ENCODE measurements at regions of chr19 and their contacts with region 1.

Region 1: GRCh38 chr19:40425450-40426287 is at the start of gene SERTAD1:
- DNase-seq: peak; percentile 100
- ATAC-seq: peak; percentile 89
- H3K4me3 ChIP-seq: peak within 1 kb of the TSS; percentile 89
- H3K4me3 Mint-ChIP-seq: peak within 1 kb of the TSS; percentile 99
- H3K27ac ChIP-seq: peak within 1 kb of the TSS; percentile 90
- H3K27ac Mint-ChIP-seq: peak within 1 kb of the TSS; percentile 91
- H3K4me1 ChIP-seq: peaks cover 45% of the 10 kb centered on the region
- H3K4me1 Mint-ChIP-seq: peaks cover 36% of the 10 kb centered on the region
- H3K27me3 ChIP-seq: no peaks in the 10 kb centered on the region
- H3K27me3 Mint-ChIP-seq: no peaks in the 10 kb centered on the region
- CTCF ChIP-seq: peak; percentile 67
- total RNA-seq, gene SERTAD1: 26.4 to 26.5 TPM

Region 2: DNA sequence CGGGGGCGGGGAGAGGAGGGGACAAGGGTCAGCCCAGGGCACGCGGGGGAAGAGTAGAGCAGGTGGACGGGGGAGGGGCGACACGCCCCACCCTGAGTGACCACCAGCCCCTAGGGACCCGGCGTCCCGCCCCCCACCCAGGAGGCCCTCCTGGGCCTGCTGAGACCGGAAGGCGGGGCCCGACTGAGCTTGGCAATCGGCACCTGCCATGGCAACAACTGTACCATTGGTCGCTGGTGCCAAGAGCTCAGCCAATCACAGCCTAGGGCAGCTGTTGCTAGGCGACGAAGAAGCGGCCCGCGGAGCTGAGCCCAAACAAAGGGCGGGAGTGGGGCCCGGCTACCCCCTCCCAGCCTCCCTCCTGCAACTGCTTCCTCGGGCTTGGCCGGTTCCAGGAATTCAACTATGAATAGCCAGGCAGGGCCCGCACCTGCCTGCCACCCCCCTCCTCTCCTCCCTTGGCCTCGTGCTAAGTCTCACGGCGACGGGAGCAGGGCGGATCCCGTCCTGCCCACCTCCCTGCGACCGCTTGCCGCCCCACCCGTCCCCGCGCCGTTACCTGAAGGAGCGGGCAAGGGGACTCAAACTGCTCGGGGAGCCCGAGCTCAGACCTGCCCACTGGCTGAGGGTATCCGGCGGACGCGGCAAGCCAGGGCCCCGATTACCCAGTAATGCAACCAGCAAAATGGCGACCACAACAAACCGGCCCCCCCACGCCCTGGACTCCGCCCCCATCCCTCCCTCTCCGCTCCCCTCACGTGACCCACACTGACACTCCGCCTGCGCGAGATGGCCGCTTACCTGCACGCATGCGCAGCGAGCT is 592.0 kb before region 1 on chr19 and contains the start of gene DYRK1B:
- CTCF ChIA-PET with region 1: no interaction called
- POLR2A ChIA-PET with region 1: no interaction called
- intact Hi-C with region 1: loop called in 1 of 2 experiments (anchors 10 kb)
- DNase-seq: peak; percentile 96 to 100 (median 98)
- ATAC-seq: peak; percentile 86
- H3K4me3 ChIP-seq: peak within 1 kb of the TSS; percentile 88
- H3K4me3 Mint-ChIP-seq: peak within 1 kb of the TSS; percentile 81
- H3K27ac ChIP-seq: peak within 1 kb of the TSS; percentile 96 to 99
- H3K27ac Mint-ChIP-seq: peak within 1 kb of the TSS; percentile 68
- H3K4me1 ChIP-seq: peaks cover 29% of the 10 kb centered on the region
- H3K4me1 Mint-ChIP-seq: peaks cover 20% of the 10 kb centered on the region
- H3K27me3 ChIP-seq: no peaks in the 10 kb centered on the region
- H3K27me3 Mint-ChIP-seq: no peaks in the 10 kb centered on the region
- CTCF ChIP-seq: no peak
- total RNA-seq, gene DYRK1B: 18.9 to 19.4 TPM

Region 3: GRCh38 chr19:40348125-40348913 is 77.3 kb before region 1 on chr19 and contains the starts of genes C19orf47 and PLD3:
- CTCF ChIA-PET with region 1: interaction called, 9 read pairs
- POLR2A ChIA-PET with region 1: interaction called, 10 read pairs
- intact Hi-C with region 1: loop called in 1 of 2 experiments (anchors 1 kb)
- DNase-seq: peak; percentile 93 to 100 (median 98)
- ATAC-seq: peak; percentile 90
- H3K4me3 ChIP-seq: peak within 1 kb of the TSS; percentile 68
- H3K4me3 Mint-ChIP-seq: peak within 1 kb of the TSS; percentile 96
- H3K27ac ChIP-seq: peak within 1 kb of the TSS; percentile 51 to 67
- H3K27ac Mint-ChIP-seq: peak within 1 kb of the TSS; percentile 89
- H3K4me1 ChIP-seq: peaks cover 25% of the 10 kb centered on the region
- H3K4me1 Mint-ChIP-seq: peaks cover 46% of the 10 kb centered on the region
- H3K27me3 ChIP-seq: no peaks in the 10 kb centered on the region
- H3K27me3 Mint-ChIP-seq: no peaks in the 10 kb centered on the region
- CTCF ChIP-seq: no peak
- total RNA-seq, gene C19orf47: 10.1 to 11.2 TPM
- total RNA-seq, gene PLD3: 56.1 to 58.3 TPM

Region 4: DNA sequence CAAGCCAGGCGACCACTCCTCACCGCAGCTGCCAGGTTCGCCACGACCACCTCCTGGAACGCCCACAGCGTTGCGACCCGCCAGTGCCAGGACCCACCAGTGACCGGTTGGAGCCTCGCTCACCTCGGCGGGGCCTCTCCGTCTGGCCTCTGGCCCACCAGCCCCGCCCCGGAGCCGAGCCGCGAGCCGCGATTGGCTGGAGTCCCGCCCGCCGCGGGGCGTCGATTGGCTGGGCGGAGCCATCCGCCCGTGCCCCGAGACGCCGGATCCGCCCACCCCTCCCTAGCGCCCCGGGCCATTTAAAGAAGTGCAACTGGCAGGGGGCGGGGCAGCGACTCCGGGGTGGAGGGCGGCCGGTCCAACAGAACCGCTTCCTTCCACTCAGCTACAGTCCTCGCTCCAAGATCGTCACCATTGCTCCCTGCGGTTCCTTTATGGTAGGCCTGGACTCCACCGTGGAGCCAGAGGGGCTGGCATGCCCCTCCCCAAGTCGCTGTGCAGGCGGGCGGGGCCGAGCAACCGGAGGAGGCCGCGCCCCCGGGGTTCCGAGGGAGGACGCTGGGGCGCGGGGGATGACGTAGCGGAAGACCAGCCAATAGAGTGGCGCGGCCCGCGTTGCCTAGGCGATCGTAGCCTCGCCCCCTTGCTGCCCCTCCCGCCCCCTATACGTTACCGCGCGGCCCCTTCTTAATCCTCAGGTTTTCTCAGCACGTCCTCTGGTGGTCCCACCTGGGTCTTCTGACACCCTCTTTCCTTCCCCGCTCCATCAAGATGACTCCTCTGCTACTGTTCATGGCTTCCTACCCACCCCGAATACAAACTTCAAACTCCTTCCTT is 18.7 kb after region 1 on chr19 and contains the start of gene SERTAD3:
- CTCF ChIA-PET with region 1: interaction called, 32 read pairs
- POLR2A ChIA-PET with region 1: interaction called, 71 read pairs
- intact Hi-C with region 1: loop called (anchors 1 kb)
- DNase-seq: peak; percentile 93 to 98 (median 96)
- ATAC-seq: peak; percentile 66
- H3K4me3 ChIP-seq: peak within 1 kb of the TSS; percentile 75
- H3K4me3 Mint-ChIP-seq: peak within 1 kb of the TSS; percentile 96
- H3K27ac ChIP-seq: peak within 1 kb of the TSS; percentile 81 to 86
- H3K27ac Mint-ChIP-seq: peak within 1 kb of the TSS; percentile 86
- H3K4me1 ChIP-seq: peaks cover 18% of the 10 kb centered on the region
- H3K4me1 Mint-ChIP-seq: peaks cover 18% of the 10 kb centered on the region
- H3K27me3 ChIP-seq: no peaks in the 10 kb centered on the region
- H3K27me3 Mint-ChIP-seq: no peaks in the 10 kb centered on the region
- CTCF ChIP-seq: no peak
- total RNA-seq, gene SERTAD3: 17.4 to 19.2 TPM

Region 5: GRCh38 chr19:40523322-40524047 is 97.8 kb after region 1 on chr19:
- CTCF ChIA-PET with region 1: interaction called, 3 read pairs
- POLR2A ChIA-PET with region 1: no interaction called
- intact Hi-C with region 1: loop called in 1 of 2 experiments (anchors 2 kb)
- DNase-seq: peak in 9 of 14 experiments; percentile 9 to 70 (median 31)
- ATAC-seq: peak; percentile 65
- H3K4me3 ChIP-seq: no peak overlapping the region
- H3K4me3 Mint-ChIP-seq: no peak overlapping the region
- H3K27ac ChIP-seq: no peak overlapping the region
- H3K27ac Mint-ChIP-seq: no peak overlapping the region
- H3K4me1 ChIP-seq: peaks cover 3% of the 10 kb centered on the region
- H3K4me1 Mint-ChIP-seq: no peaks in the 10 kb centered on the region
- H3K27me3 ChIP-seq: peaks cover 4 to 13% of the 10 kb centered on the region in 2 experiments
- H3K27me3 Mint-ChIP-seq: peaks cover 24% of the 10 kb centered on the region
- CTCF ChIP-seq: no peak

Region 6: DNA sequence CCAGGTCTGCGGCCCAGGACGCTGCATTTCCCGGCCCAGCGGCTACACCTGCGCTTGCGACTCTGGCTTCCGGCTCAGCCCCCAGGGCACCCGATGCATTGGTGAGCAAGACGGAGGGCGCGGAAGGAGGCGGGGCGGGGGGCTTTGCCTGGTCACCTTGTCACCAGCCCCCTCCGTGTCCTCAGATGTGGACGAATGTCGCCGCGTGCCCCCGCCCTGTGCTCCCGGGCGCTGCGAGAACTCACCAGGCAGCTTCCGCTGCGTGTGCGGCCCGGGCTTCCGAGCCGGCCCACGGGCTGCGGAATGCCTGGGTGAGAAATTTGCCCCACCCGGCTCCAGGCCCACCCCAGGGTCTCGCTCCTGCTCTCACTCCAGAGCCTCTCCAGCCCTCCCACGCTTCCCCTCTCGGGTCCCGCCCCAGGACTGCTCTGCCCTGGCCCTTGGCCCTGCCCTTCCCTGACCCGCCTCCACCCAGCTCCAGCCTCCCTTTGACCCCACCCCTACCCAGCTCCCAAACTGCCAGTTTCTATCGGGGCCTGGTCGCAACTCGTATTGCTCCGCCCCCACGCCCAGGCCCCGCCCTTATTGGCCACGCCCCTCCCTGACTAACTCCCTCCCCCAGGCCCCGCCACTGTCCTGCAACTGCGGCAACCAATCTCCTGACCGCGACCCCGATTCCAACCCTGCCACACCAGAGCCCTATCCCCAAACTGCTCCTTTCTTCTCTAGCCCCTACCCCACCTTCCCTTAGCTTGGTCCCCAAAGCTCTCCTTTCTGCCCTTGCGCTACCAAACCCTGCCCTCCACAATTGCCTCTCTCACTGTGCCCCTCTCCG is 184.1 kb after region 1 on chr19:
- CTCF ChIA-PET with region 1: no interaction called
- POLR2A ChIA-PET with region 1: interaction called, 4 read pairs
- intact Hi-C with region 1: loop called (anchors 5 kb)
- DNase-seq: peak; percentile 70 to 92 (median 84)
- ATAC-seq: peak; percentile 16
- H3K4me3 ChIP-seq: peak overlapping the region; percentile 61
- H3K4me3 Mint-ChIP-seq: peak overlapping the region; percentile 88
- H3K27ac ChIP-seq: peak overlapping the region; percentile 66 to 84
- H3K27ac Mint-ChIP-seq: peak overlapping the region; percentile 95
- H3K4me1 ChIP-seq: peaks cover 95% of the 10 kb centered on the region
- H3K4me1 Mint-ChIP-seq: peaks cover 78% of the 10 kb centered on the region
- H3K27me3 ChIP-seq: no peaks in the 10 kb centered on the region
- H3K27me3 Mint-ChIP-seq: no peaks in the 10 kb centered on the region
- CTCF ChIP-seq: no peak

Region 7: DNA sequence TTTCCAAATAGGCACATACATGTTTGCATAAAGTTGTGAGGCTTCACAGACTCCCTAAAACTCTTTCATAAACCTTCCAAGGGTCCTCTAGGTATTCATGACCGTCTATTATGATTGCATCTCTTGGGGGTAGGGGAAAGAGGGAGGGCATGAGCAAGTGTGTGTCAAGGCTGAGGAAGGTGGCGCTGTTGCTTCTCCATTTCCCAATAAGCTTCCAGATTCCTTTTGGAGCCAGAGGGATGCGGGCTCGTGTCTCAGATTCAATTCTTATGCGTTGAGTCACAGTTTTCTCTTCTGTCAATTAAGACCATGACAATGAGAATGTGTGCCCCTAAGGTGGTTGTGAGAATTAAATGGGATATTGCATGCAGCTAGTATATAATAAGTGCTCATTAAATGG is 507.4 kb after region 1 on chr19:
- CTCF ChIA-PET with region 1: no interaction called
- POLR2A ChIA-PET with region 1: no interaction called
- intact Hi-C with region 1: no loop called
- DNase-seq: no peak
- ATAC-seq: no peak
- H3K4me3 ChIP-seq: no peak overlapping the region
- H3K4me3 Mint-ChIP-seq: no peak overlapping the region
- H3K27ac ChIP-seq: no peak overlapping the region
- H3K27ac Mint-ChIP-seq: no peak overlapping the region
- H3K4me1 ChIP-seq: no peaks in the 10 kb centered on the region
- H3K4me1 Mint-ChIP-seq: no peaks in the 10 kb centered on the region
- H3K27me3 ChIP-seq: peaks cover 5 to 6% of the 10 kb centered on the region in 2 experiments
- H3K27me3 Mint-ChIP-seq: peaks cover 38% of the 10 kb centered on the region
- CTCF ChIP-seq: no peak